CD4-positive, alpha-beta memory T cell (primary cell): ENCODE measurements at regions of chr11 and their contacts with region 1.

Region 1: GRCh38 chr11:125568970-125569914 is at the start of gene EI24:
- DNase-seq: peak; percentile 83 to 86 (median 85)
- H3K4me3 ChIP-seq: peak within 1 kb of the TSS; percentile 84 to 93
- H3K4me3 Mint-ChIP-seq: peak within 1 kb of the TSS; percentile 88 to 95 (median 93)
- H3K27ac ChIP-seq: peak within 1 kb of the TSS; percentile 81
- H3K27ac Mint-ChIP-seq: peak within 1 kb of the TSS; percentile 85 to 97 (median 94)
- H3K4me1 ChIP-seq: peaks cover 25% of the 10 kb centered on the region
- H3K4me1 Mint-ChIP-seq: peaks cover 13 to 32% (median 18%) of the 10 kb centered on the region in 4 donors
- H3K27me3 ChIP-seq: no peaks in the 10 kb centered on the region
- H3K27me3 Mint-ChIP-seq: peaks cover 0 to 1% of the 10 kb centered on the region in 2 donors
- total RNA-seq, gene EI24: 35.5 to 36.8 TPM

Region 2: DNA sequence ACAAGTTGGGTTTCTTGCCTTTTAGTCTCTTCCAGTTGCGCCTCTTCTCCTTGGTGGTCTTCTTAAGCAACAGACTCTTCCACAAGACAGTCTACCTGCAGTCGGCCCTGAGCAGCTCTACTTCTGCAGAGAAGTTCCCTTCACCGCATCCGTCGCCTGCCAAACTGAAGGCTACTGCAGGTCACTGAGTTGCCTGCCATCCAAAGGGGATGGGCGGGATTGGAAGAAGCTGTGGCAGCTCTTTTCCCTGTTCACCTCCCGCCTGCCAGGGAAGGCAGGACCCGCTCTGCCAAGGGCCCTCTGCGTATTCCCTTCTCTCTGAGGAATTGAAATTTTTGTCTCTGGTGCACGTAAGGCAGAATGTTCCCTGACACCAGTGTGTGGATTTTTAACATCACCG is 14.3 kb after region 1 on chr11:
- CTCF ChIA-PET with region 1: interaction called, 4 read pairs
- POLR2A ChIA-PET with region 1: interaction called, 13 read pairs
- intact Hi-C with region 1: no loop called
- DNase-seq: no peak
- H3K4me3 ChIP-seq: no peak overlapping the region
- H3K4me3 Mint-ChIP-seq: no peak overlapping the region
- H3K27ac ChIP-seq: no peak overlapping the region
- H3K27ac Mint-ChIP-seq: peak overlapping the region in 1 of 7 donors; percentile 73
- H3K4me1 ChIP-seq: no peaks in the 10 kb centered on the region
- H3K4me1 Mint-ChIP-seq: peaks cover 0 to 1% (median under 1%) of the 10 kb centered on the region in 4 donors
- H3K27me3 ChIP-seq: no peaks in the 10 kb centered on the region
- H3K27me3 Mint-ChIP-seq: no peaks in the 10 kb centered on the region

Region 3: GRCh38 chr11:125618383-125618782 is 49.1 kb after region 1 on chr11:
- CTCF ChIA-PET with region 1: interaction called, 4 read pairs
- POLR2A ChIA-PET with region 1: no interaction called
- intact Hi-C with region 1: loop called (anchors 2 kb)
- DNase-seq: no peak
- H3K4me3 ChIP-seq: no peak overlapping the region
- H3K4me3 Mint-ChIP-seq: no peak overlapping the region
- H3K27ac ChIP-seq: no peak overlapping the region
- H3K27ac Mint-ChIP-seq: no peak overlapping the region
- H3K4me1 ChIP-seq: no peaks in the 10 kb centered on the region
- H3K4me1 Mint-ChIP-seq: no peaks in the 10 kb centered on the region
- H3K27me3 ChIP-seq: no peaks in the 10 kb centered on the region
- H3K27me3 Mint-ChIP-seq: no peaks in the 10 kb centered on the region

Region 4: DNA sequence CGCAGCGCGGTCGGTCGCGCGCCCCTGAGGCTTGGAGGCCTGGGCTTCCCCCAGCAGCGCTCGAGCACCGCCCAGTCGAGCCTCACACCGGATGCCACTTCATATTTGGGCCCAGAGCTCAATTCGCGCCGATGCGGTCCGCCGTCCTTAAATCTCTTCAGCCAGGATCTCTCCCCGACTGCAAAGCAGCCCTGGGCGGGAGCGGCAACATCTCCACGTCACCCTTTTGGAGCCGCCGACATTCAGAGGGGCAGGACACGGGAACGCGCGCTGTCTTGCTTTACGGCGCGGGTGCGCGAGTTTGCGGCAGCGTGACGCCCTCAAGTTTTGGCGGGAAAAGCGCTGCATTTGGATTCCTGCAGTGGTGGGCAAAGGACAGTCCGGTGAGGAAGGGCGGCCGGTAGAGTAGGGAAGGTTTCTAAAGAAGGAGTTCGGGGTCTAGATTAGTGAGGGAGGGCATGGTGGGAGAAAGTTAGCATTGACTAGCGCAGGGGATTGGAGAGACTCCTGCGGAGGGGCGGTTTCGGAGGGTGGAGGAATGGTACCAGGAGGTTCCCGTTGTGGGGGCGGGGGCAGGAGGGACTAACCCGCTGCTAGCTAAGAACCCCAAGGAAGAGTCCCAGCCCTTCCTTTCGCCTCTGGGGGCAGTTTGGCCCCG is 56.5 kb after region 1 on chr11:
- CTCF ChIA-PET with region 1: interaction called, 20 read pairs
- POLR2A ChIA-PET with region 1: interaction called, 24 read pairs
- intact Hi-C with region 1: loop called (anchors 1 kb)
- DNase-seq: peak; percentile 81 to 88 (median 85)
- H3K4me3 ChIP-seq: peak overlapping the region; percentile 84 to 98
- H3K4me3 Mint-ChIP-seq: peak overlapping the region; percentile 93 to 100 (median 98)
- H3K27ac ChIP-seq: peak overlapping the region; percentile 95
- H3K27ac Mint-ChIP-seq: peak overlapping the region; percentile 87 to 99 (median 99)
- H3K4me1 ChIP-seq: peaks cover 19% of the 10 kb centered on the region
- H3K4me1 Mint-ChIP-seq: peaks cover 11 to 29% (median 16%) of the 10 kb centered on the region in 4 donors
- H3K27me3 ChIP-seq: no peaks in the 10 kb centered on the region
- H3K27me3 Mint-ChIP-seq: no peaks in the 10 kb centered on the region

Region 5: DNA sequence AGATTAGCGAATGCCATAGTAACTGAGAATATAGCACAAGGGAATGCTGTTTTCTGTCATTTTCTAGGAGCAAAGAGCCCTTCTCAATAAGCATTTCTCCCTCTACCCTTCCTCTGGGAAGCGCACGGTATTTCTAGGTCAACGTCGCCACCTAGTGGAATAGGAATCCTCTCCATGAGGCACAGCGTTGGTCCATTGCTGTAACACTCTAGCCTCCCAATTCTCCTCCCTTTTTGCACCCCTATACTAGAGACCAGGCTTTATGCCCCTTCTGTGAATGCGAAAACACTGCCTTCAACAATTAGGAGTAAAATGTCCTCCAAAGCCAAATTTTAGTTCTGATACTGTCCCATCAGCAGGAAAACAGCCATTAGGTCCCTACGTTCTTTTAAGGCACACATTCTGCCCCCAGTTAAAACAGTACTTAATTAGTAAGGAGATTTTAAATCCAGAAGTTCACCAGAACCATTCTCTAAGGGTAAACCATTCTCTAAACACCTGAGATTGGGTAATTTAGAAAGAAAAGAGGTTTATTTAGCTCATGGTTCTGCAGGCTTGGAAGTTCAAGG is 305.4 kb after region 1 on chr11:
- CTCF ChIA-PET with region 1: interaction called, 7 read pairs
- POLR2A ChIA-PET with region 1: no interaction called
- intact Hi-C with region 1: loop called (anchors 2 kb)
- DNase-seq: peak in 4 of 5 donors; percentile 23 to 39 (median 29)
- H3K4me3 ChIP-seq: no peak overlapping the region
- H3K4me3 Mint-ChIP-seq: no peak overlapping the region
- H3K27ac ChIP-seq: no peak overlapping the region
- H3K27ac Mint-ChIP-seq: no peak overlapping the region
- H3K4me1 ChIP-seq: no peaks in the 10 kb centered on the region
- H3K4me1 Mint-ChIP-seq: peaks cover 0 to 3% (median 1%) of the 10 kb centered on the region in 4 donors
- H3K27me3 ChIP-seq: no peaks in the 10 kb centered on the region
- H3K27me3 Mint-ChIP-seq: peaks cover 2 to 3% of the 10 kb centered on the region in 2 donors

Region 6: DNA sequence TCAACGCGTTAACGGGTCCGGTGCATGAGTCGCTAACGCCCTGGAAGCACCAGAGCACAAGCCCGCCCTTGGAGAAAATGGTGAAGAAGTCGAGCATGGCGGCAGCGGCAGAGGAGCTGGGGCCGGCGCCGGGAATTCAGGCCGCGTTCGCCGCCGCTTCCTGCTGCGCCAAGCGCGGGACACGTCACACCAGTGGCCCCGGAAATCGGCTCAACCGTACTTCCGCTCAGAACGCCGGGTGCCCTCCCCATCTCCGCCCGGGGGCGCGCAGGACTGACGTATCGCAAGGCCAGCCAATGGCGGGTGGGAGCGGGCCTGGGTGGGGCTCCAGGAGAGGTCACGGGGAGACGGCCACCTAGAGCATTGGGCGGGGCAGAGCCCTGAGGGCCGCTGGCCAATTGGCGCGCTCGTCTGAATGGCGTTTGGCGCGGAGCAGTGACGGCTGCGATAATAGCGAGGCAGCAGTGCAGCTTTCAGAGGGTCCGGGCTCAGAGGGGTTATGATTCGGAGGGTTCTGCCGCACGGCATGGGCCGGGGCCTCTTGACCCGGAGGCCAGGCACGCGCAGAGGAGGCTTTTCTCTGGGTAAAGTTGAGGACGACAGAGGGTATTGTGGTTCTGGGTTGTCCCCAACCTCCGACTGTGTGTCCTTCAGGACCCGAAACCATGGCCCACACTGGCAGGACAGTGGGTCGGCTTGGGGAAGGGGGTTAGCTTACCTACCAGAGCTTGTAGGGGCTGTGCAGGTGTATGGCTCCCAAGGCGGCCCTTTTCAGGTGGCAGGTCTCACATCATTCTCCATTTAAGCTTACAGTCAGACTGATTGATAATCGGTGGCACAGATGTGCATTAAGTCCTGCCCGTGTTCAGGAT is 699.7 kb after region 1 on chr11 and contains the starts of genes FOXRED1 and SRPRA:
- CTCF ChIA-PET with region 1: no interaction called
- POLR2A ChIA-PET with region 1: interaction called, 4 read pairs
- intact Hi-C with region 1: loop called (anchors 10 kb)
- DNase-seq: peak; percentile 100
- H3K4me3 ChIP-seq: peak within 1 kb of the TSS; percentile 84 to 96
- H3K4me3 Mint-ChIP-seq: peak within 1 kb of the TSS; percentile 95 to 99 (median 96)
- H3K27ac ChIP-seq: peak within 1 kb of the TSS; percentile 83
- H3K27ac Mint-ChIP-seq: peak within 1 kb of the TSS; percentile 94 to 99 (median 99)
- H3K4me1 ChIP-seq: peaks cover 26% of the 10 kb centered on the region
- H3K4me1 Mint-ChIP-seq: peaks cover 19 to 43% (median 24%) of the 10 kb centered on the region in 4 donors
- H3K27me3 ChIP-seq: no peaks in the 10 kb centered on the region
- H3K27me3 Mint-ChIP-seq: no peaks in the 10 kb centered on the region
- total RNA-seq, gene FOXRED1: 30.5 to 32.5 TPM
- total RNA-seq, gene SRPRA: 171 to 176 TPM

Region 7: DNA sequence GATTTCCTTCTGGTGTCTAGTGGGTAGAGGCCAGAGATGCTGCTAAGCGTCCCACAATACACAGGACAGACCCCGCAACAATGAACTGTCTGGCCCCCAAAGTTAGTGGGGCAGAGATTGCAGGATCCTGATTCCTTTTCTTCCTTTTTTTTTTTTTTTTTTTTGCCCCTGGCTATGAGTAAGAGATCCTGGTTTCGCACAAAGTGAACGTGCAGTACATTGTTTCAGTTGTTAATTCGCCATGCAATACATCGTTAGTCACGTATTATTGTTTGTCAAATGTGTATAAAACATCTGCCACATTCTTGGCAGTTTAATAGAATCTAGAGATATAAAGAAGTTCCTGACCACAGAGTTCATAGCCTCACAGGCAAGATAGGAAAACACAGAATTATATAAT is 806.5 kb after region 1 on chr11:
- CTCF ChIA-PET with region 1: no interaction called
- POLR2A ChIA-PET with region 1: no interaction called
- intact Hi-C with region 1: no loop called
- DNase-seq: no peak
- H3K4me3 ChIP-seq: no peak overlapping the region
- H3K4me3 Mint-ChIP-seq: no peak overlapping the region
- H3K27ac ChIP-seq: no peak overlapping the region
- H3K27ac Mint-ChIP-seq: no peak overlapping the region
- H3K4me1 ChIP-seq: no peaks in the 10 kb centered on the region
- H3K4me1 Mint-ChIP-seq: peaks cover 0 to 6% (median under 1%) of the 10 kb centered on the region in 4 donors
- H3K27me3 ChIP-seq: no peaks in the 10 kb centered on the region
- H3K27me3 Mint-ChIP-seq: no peaks in the 10 kb centered on the region